ENCODE measurements at regions of chr1 and their contacts with region 1.

Region 1: DNA sequence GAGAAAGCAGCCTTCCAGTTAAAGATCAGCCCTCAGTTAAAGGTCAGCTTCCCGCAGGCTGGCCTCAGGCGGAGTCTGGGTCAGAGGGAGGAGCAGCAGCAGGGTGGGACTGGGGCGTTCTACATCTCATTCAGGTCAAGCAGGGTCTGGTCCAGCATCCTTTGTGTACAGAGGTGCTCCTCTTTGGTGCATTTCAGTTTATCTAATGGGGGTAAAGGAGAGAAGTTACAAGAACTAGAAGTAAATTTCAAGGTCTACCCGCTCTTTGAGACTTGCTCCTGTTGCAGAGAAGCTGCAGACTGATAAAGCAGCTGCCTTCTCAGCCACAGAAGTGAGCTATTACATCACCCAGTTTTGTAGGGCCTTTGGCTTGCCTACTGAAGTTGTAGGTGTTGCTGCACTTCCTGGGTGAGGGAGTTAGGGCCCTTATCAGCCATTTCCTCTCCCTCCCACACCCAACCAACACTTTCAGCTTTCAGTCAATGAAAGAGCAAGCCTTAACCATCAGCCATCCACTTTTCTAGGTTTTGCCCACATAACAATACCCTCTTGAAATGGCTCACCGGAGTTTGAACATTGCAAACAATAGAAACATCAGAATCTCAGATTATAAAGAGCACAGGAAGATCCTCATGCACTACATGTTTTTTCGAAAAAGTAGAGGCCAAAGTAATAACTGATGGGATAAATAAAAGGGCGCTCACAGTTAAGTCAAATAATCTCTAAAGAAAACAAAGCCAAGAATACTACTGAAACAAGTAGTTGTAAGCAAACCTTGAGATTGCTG is 2.8 kb upstream of the NUP210L start:
- DNase-seq: peak; percentile 93
- H3K4me3 Mint-ChIP-seq: peak overlapping the region; percentile 74
- H3K27ac Mint-ChIP-seq: peak overlapping the region; percentile 82
- H3K4me1 Mint-ChIP-seq: peaks cover 55% of the 10 kb centered on the region
- H3K27me3 Mint-ChIP-seq: no peaks in the 10 kb centered on the region

Region 2: DNA sequence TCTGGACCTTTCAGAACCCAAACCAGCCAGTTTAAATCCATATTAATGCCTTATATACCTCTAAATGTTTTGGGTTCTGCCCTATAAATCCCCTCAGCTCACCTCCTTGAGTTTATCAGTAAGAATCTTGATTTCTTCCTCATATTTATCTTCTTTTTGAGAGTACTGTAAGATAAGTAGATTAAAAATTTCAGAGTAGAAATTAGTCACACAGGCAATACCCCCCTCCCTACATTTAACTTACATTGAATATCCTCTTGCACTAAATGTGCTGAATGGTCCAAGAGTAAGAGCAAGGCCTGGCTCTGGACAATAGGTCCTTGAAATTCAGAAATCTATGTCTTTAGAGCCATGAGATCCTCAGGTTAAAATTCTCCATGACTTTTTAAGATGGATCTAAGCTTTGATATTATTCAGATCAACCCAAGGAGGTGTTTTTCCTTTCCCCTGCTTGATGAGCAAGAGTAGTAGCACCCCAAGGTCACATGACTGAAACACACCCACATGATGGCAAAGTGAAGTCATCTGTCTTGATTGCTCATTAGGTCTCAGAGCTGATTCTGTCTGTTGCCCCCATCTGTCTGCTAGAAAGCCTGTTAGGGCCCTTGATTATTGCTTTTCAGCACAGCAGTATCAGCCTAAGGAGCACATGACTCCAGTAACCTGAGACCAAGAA is 13.0 kb after region 1 on chr1:
- intact Hi-C with region 1: loop called (anchors 1 kb)
- DNase-seq: peak; percentile 72
- H3K4me3 Mint-ChIP-seq: peak overlapping the region; percentile 45
- H3K27ac Mint-ChIP-seq: peak overlapping the region; percentile 88
- H3K4me1 Mint-ChIP-seq: peaks cover 40% of the 10 kb centered on the region
- H3K27me3 Mint-ChIP-seq: no peaks in the 10 kb centered on the region

Measured in activated CD4-positive, alpha-beta T cell treated with anti-CD3 and anti-CD28 coated beads, Interleukin-2, amount 10 ng/mL, durations not matched to agents 24 days and 14 days (primary cell).